H1 (cell line): ENCODE measurements at regions of chr1 and their contacts with region 1.

Region 1: DNA sequence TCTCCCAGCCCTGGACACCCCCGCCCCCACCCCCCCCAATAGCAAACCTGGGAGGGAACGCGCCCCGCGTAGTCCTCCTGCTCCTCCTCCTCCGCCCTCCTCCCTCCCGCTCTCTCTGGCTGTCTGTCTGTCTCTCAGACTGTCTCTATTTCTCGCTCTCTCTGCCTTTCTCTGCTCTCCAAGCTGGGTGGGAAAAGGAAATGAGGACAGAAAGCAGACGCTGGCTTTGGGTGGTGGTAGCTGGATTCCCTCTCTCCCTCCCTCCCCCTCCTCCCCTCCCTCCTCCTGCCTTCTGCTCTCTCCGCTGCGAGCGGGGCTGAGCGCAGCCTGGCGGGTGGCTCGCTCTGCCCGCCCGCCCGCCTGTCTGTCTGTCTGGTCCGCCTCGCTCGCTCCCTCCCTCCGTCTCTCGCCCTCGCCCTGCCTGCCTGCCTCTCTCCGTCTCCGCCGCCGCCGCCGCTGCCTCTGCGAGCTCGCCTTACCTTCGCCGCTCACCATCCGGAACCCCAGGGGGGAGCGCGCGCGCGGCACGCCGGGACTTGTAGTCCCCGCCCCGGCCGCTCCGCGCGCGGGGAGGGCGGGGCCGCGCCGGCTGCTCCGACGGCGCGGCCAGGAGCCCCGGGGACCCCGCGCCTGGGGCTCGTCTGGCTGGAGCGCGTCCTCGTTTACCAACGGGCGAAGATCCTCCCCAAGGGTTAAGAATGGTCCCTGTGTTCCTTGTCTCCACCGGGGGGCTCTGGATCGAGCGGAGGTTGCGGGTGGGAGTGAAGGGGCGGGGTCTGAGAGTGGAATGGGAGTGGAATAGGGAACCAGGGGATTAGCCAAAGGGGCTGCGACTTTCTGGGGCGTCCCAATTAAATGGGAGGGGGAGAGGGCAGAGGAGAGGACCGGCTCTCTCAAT is at the start of gene AHDC1:
- DNase-seq: peak in 1 of 2 experiments; percentile 97
- H3K4me3 ChIP-seq: peak within 1 kb of the TSS; percentile 57 to 82 (median 68)
- H3K27ac ChIP-seq: no peak within 1 kb of the TSS
- H3K4me1 ChIP-seq: peaks cover 30 to 53% (median 40%) of the 10 kb centered on the region in 4 experiments
- H3K27me3 ChIP-seq: no peaks in the 10 kb centered on the region
- CTCF ChIP-seq: no peak; a peak in 1 of 4 replicates
- EP300 ChIP-seq: no peak
- POLR2A ChIP-seq: peak in 1 of 2 experiments; percentile 68; a peak in 2 of 3 replicates
- RAD21 ChIP-seq: no peak; a peak in 1 of 4 replicates
- total RNA-seq, gene AHDC1: 35.1 and 39.4 TPM in 2 replicates

Region 2: DNA sequence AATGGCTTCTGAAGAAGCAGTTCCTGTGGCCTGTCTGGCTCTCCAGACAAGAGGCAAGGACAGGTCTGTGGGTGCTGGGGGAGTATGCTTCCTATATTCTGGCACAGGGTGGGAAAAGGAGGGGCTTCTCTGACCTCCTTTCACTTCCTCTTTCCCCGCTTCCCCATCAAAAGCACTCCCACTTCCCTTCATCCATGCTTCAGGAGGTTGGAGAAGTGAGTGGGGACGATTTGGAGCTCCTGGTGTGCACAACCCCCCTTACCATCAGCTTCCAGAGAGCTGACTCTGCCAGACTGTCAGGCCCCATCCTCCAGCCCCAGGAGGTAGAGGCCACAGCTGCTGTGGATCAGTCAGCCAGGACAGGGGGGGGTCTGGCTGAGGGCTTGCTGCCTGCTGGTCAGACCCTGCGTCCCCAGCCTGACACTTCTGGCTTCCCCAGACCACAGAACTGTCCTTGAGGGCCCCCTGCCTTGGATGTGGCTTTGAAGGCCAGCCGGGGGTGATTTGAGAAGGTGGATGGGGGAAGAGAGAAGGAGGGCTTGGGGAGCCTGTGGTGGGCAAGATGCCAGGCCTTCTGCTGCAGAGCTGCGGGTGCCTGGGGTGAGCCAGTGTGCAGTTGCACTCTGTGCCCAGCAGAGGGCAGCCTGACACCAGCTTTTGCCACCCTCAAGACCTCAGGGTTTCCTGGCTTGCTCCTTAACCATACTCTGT is 303.4 kb before region 1 on chr1:
- CTCF ChIA-PET with region 1: interaction called, 86 read pairs
- POLR2A ChIA-PET with region 1: no interaction called
- DNase-seq: peak in 1 of 2 experiments; percentile 90
- H3K4me3 ChIP-seq: no peak overlapping the region
- H3K27ac ChIP-seq: no peak overlapping the region
- H3K4me1 ChIP-seq: peaks cover 0 to 22% (median 11%) of the 10 kb centered on the region in 4 experiments; a peak in 6 of 7 replicates
- H3K27me3 ChIP-seq: no peaks in the 10 kb centered on the region
- CTCF ChIP-seq: peak; percentile 97 to 99 (median 99)
- EP300 ChIP-seq: no peak
- POLR2A ChIP-seq: no peak
- RAD21 ChIP-seq: peak; percentile 99 to 100

Region 3: DNA sequence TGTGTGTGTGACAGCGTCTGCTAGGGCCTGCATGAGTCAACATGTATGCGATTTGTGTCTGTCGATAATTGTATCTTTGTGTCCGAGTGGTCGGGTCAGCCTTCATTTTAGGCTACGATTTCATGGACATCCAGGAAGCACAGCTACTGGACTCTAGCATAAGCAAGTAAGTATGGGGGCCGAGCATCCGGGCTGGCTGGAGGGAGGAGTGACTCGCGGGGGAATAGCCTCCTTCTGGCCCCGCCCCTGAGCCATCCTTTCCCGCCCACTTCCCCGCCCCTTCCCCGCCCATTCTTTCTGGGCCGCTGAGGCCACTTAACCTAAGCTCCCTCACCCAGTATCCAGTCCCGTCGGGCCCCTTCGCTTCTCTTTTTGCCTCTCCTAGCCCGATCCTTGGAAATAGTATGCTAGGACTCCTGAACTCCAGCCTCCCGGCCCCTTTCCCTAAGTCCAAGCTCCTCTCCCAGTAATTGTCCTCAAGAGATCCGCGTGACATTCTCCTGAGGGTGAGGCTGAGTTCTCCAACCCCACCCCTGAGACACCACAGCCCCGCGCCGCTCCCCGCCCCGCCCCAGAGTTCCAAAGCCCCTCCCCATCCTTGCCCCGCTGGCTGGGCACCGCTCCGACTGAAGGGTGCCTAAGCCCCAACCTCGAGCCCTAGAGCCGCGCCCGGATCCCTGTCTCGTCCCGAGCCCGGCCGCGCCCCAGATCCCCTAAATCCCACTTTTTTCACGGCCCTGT is 238.4 kb before region 1 on chr1:
- CTCF ChIA-PET with region 1: interaction called, 16 read pairs
- POLR2A ChIA-PET with region 1: no interaction called
- DNase-seq: peak in 1 of 2 experiments; percentile 86
- H3K4me3 ChIP-seq: peak overlapping the region; percentile 62 to 71 (median 64)
- H3K27ac ChIP-seq: no peak overlapping the region
- H3K4me1 ChIP-seq: peaks cover 6 to 20% (median 8%) of the 10 kb centered on the region in 4 experiments
- H3K27me3 ChIP-seq: peaks cover 5 to 15% (median 11%) of the 10 kb centered on the region in 4 experiments; a peak in 6 of 7 replicates
- CTCF ChIP-seq: no peak
- EP300 ChIP-seq: peak in 1 of 2 experiments; percentile 98; a peak in 1 of 3 replicates
- POLR2A ChIP-seq: peak in 1 of 2 experiments; percentile 51; a peak in 2 of 3 replicates
- RAD21 ChIP-seq: no peak

Region 4: GRCh38 chr1:27430903-27431600 is 172.9 kb before region 1 on chr1:
- CTCF ChIA-PET with region 1: interaction called, 11 read pairs
- POLR2A ChIA-PET with region 1: interaction called, 4 read pairs
- DNase-seq: no peak
- H3K4me3 ChIP-seq: no peak overlapping the region
- H3K27ac ChIP-seq: peak overlapping the region; percentile 25; the same call in 1 of the 2 replicates
- H3K4me1 ChIP-seq: peaks cover 14 to 29% (median 22%) of the 10 kb centered on the region in 4 experiments
- H3K27me3 ChIP-seq: no peaks in the 10 kb centered on the region
- CTCF ChIP-seq: no peak
- EP300 ChIP-seq: no peak
- POLR2A ChIP-seq: no peak
- RAD21 ChIP-seq: no peak

Region 5: GRCh38 chr1:27525296-27526272 is 78.3 kb before region 1 on chr1:
- CTCF ChIA-PET with region 1: interaction called, 110 read pairs
- POLR2A ChIA-PET with region 1: interaction called, 9 read pairs
- DNase-seq: peak in 1 of 2 experiments; percentile 81
- H3K4me3 ChIP-seq: peak overlapping the region in 3 of 4 experiments; percentile 15 to 42 (median 34); a peak in 4 of 8 replicates
- H3K27ac ChIP-seq: 0 out of 2 replicates have a peak overlapping the region, but pooled peaks have one; percentile 43
- H3K4me1 ChIP-seq: peaks cover 12 to 56% (median 42%) of the 10 kb centered on the region in 4 experiments
- H3K27me3 ChIP-seq: no peaks in the 10 kb centered on the region
- CTCF ChIP-seq: no peak
- EP300 ChIP-seq: no peak
- POLR2A ChIP-seq: no peak
- RAD21 ChIP-seq: no peak; a peak in 1 of 4 replicates

Region 6: DNA sequence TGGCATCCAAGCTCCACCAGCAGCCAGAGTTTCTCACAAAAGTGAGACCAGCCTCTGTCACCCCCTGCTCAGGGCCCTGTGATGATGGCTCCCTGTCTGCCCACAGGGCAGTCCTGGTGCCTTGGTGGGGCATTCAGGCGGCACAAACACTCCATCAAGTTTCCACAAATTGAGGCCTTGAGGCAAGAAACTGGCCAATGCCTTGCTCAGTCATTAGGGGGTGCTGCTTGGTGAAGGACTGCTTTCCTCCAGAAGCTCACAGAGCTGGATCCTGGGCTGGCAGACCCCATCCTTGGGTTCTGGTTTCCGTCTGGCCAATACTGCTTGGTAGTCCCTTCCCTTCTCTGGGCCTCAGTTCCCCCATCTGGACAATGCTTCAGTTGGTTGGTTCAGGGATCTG is 12.5 kb after region 1 on chr1:
- CTCF ChIA-PET with region 1: interaction called, 129 read pairs
- POLR2A ChIA-PET with region 1: interaction called, 6 read pairs
- DNase-seq: no peak
- H3K4me3 ChIP-seq: no peak overlapping the region
- H3K27ac ChIP-seq: no peak overlapping the region
- H3K4me1 ChIP-seq: peaks cover 0 to 17% (median 9%) of the 10 kb centered on the region in 4 experiments; a peak in 6 of 7 replicates
- H3K27me3 ChIP-seq: peaks cover 0 to 11% (median 6%) of the 10 kb centered on the region in 4 experiments; a peak in 2 of 7 replicates
- CTCF ChIP-seq: peak; percentile 55 to 76 (median 63)
- EP300 ChIP-seq: no peak
- POLR2A ChIP-seq: no peak
- RAD21 ChIP-seq: peak; percentile 39 to 57

Region 7: GRCh38 chr1:27662707-27663393 is 58.9 kb after region 1 on chr1:
- CTCF ChIA-PET with region 1: interaction called, 472 read pairs
- POLR2A ChIA-PET with region 1: interaction called, 5 read pairs
- DNase-seq: peak; percentile 78 to 99
- H3K4me3 ChIP-seq: no peak overlapping the region
- H3K27ac ChIP-seq: 0 out of 2 replicates have a peak overlapping the region, but pooled peaks have one; percentile 5
- H3K4me1 ChIP-seq: peaks cover 4 to 20% (median 13%) of the 10 kb centered on the region in 4 experiments; a peak in 6 of 7 replicates
- H3K27me3 ChIP-seq: peaks cover 0 to 2% (median 0%) of the 10 kb centered on the region in 4 experiments; a peak in 2 of 7 replicates
- CTCF ChIP-seq: peak; percentile 74 to 91 (median 88)
- EP300 ChIP-seq: no peak
- POLR2A ChIP-seq: no peak
- RAD21 ChIP-seq: peak; percentile 94

Region 8: GRCh38 chr1:28064064-28064463 is 460.1 kb after region 1 on chr1:
- CTCF ChIA-PET with region 1: no interaction called
- POLR2A ChIA-PET with region 1: no interaction called
- DNase-seq: no peak
- H3K4me3 ChIP-seq: no peak overlapping the region
- H3K27ac ChIP-seq: no peak overlapping the region
- H3K4me1 ChIP-seq: no peaks in the 10 kb centered on the region
- H3K27me3 ChIP-seq: no peaks in the 10 kb centered on the region
- CTCF ChIP-seq: no peak
- EP300 ChIP-seq: no peak
- POLR2A ChIP-seq: no peak
- RAD21 ChIP-seq: no peak